Aorta (tissue), 5 donors: ENCODE measurements at regions of chrX and their contacts with region 1.

Region 1: GRCh38 chrX:51496501-51497291 is at the start of gene NUDT11:
- DNase-seq: peak; percentile 73 to 90
- ATAC-seq: peak; percentile 87
- H3K4me3 ChIP-seq: peak within 1 kb of the TSS; percentile 12 to 47
- H3K27ac ChIP-seq: no peak within 1 kb of the TSS
- H3K4me1 ChIP-seq: no peaks in the 10 kb centered on the region
- H3K27me3 ChIP-seq: no peaks in the 10 kb centered on the region
- total RNA-seq, gene NUDT11: 1.4 to 2.1 TPM

Region 2: GRCh38 chrX:51144852-51145442 is 351.7 kb before region 1 on chrX:
- intact Hi-C with region 1: no loop called
- DNase-seq: no peak
- ATAC-seq: no peak
- H3K4me3 ChIP-seq: no peak overlapping the region
- H3K27ac ChIP-seq: no peak overlapping the region
- H3K4me1 ChIP-seq: no peaks in the 10 kb centered on the region
- H3K27me3 ChIP-seq: no peaks in the 10 kb centered on the region

Region 3: DNA sequence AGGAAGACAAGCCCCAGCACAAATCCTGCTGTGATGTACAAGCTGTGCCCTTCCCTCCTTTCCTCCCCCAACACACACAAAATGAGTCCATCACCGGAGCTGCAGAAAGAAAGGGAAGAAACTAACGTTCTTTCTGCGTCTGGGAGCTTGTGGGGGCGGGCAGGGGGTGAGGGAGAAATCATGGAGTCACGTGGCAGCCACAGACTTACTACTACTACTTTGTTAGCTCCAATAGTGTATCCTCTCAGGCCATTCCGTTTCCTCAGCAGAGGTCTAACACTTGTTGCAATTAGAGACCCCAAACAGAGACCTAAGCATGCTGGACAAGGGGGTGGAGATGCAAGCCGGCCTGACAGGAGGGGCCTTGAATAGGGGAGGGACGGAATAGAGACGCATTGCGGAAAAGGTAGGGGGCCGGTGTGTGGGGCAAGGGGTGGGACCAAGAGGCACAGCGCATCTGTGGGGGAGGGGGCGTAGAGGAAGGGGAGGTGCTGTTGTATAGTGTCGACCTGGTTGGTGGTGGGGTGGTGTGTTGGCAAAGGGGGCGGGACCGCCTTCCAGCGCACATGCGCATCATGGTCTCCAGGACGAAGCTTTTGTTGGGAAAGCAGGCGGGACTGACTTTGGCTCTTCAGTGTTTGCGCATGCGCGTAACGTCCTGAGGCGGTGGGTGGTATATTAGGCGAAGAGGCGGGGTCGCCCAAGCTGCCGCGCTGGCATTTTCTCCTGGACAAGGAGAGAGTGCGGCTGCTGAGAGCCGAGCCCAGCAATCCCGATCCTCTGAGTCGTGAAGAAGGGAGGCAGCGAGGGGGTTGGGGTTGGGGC is 396.4 kb after region 1 on chrX and contains the start of gene MAGED1:
- intact Hi-C with region 1: loop called in 1 of 2 experiments (anchors 10 kb)
- DNase-seq: peak; percentile 94
- ATAC-seq: peak; percentile 91
- H3K4me3 ChIP-seq: peak within 1 kb of the TSS; percentile 52 to 58
- H3K27ac ChIP-seq: peak within 1 kb of the TSS in 1 of 2 donors; percentile 87
- H3K4me1 ChIP-seq: no peaks in the 10 kb centered on the region
- H3K27me3 ChIP-seq: no peaks in the 10 kb centered on the region
- total RNA-seq, gene MAGED1: 82.2 to 91.2 TPM